Common myeloid progenitor, CD34-positive (primary cell): ENCODE measurements at regions of chr16 and their contacts with region 1.

Region 1: DNA sequence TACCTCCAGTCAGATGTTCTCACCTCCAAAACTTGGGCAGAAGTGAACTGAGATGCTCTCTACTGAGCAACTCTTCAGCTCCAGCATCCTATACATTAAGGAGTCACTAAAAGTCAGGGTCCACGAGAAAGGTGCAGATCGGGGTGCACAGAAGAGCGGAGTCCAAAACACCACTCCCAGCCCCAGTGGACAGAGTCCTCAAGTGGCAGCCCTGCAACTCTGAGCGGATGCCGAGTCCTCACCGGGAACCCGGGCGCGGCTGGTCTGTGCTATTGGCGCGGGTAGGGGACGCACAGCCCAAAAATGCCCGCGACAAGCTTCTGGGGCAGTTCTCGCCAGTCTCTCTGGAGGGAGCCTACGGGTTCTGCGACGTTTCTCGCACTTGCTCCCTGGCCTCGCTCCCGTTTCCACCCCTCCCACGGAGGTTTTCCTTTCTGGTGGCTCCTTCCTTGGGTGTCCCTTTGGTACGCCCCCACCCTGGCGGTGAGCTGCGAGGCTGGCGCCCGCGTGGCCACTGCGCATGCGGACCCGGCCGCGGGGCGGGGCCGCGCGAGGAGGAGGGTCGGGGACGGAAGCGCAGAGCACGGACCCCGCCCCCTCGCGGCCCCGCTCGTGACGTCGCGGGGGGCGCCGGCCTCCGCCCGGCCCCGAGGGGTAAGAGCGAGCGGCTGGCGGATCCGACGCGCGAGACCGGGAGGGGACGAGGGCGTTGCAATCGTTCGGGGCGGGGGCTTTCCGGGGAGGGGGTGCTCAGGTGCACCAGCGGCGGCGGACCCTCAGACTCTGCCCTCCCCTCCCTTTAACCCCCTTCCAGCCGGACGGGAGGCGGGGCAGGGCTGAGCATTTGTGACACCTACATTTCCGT is at the start of gene TMEM219:
- DNase-seq: peak; percentile 91 to 96 (median 95)
- H3K4me3 ChIP-seq: peak within 1 kb of the TSS; percentile 62 to 91 (median 82)
- H3K27ac ChIP-seq: peak within 1 kb of the TSS; percentile 66 to 82
- H3K4me1 ChIP-seq: peaks cover 7 to 19% (median 15%) of the 10 kb centered on the region in 4 experiments
- H3K27me3 ChIP-seq: no peaks in the 10 kb centered on the region

Region 2: DNA sequence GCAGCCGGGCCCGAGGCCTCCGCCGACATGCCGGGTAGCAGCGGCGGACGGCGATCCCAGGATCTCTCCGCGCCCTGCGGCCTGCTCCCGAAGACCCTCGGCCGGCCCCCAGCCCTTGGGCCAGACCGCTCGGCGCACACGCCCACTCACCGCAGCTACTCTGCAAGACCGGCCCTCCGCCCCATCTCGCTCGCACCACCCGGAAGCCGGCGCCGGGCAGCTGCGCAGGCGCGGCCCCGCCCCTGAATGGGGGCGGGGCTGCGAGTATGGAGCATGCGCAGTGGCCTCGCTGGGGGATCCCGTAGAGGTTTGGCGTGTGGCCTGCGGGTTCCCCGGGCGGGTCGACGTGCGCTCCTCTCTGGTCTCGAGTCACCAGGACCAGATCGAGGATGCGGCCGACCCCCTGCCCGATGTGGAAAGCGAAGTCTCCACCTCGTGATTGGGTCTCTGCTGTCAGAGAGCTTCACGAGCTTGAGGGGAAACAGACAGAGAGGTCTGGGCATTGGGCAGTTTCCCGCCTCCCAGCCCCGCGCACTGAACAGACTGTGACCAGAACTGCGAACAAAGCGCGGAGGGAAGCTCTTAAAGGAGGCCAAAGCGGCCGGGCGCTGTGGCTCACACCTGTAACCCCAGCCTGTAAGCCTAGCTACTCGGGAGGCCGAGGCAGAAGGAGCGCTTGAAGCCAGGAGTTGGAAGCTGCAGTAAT is 35.6 kb before region 1 on chr16 and contains the start of gene KCTD13:
- CTCF ChIA-PET with region 1: interaction called, 12 read pairs
- POLR2A ChIA-PET with region 1: interaction called, 4 read pairs
- DNase-seq: peak; percentile 80 to 86 (median 81)
- H3K4me3 ChIP-seq: peak within 1 kb of the TSS; percentile 46 to 95 (median 89)
- H3K27ac ChIP-seq: peak within 1 kb of the TSS in 1 of 2 experiments; percentile 83
- H3K4me1 ChIP-seq: peaks cover 0 to 20% (median 17%) of the 10 kb centered on the region in 4 experiments
- H3K27me3 ChIP-seq: no peaks in the 10 kb centered on the region

Region 3: GRCh38 chr16:29973384-29974246 is 11.9 kb after region 1 on chr16 and contains the start of gene TAOK2:
- CTCF ChIA-PET with region 1: interaction called, 11 read pairs
- POLR2A ChIA-PET with region 1: interaction called, 7 read pairs
- DNase-seq: peak; percentile 99
- H3K4me3 ChIP-seq: peak within 1 kb of the TSS; percentile 86 to 98 (median 95)
- H3K27ac ChIP-seq: peak within 1 kb of the TSS; percentile 80 to 87
- H3K4me1 ChIP-seq: peaks cover 7 to 31% (median 26%) of the 10 kb centered on the region in 4 experiments
- H3K27me3 ChIP-seq: no peaks in the 10 kb centered on the region

Region 4: DNA sequence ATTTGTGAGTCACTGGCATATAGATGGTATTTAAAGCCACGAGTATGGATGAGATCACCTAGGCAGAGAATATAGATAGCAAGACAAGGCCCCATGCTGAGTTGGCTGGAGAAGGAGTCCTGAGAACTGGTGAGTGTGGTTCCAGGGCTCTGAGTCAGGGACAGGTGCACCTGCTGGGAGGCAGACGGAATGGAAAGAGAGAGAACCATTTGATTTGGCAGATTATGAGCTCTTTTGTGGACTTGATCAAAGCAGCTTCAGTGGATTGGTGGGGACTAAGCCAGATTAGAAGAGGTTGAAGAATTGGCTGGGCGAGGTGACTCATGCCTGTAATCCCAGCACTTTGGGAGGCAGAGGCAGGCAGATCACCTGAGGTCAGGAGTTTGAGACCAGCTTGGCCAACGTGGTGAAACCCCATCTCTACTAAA is 57.0 kb after region 1 on chr16:
- CTCF ChIA-PET with region 1: no interaction called
- POLR2A ChIA-PET with region 1: no interaction called
- DNase-seq: no peak
- H3K4me3 ChIP-seq: no peak overlapping the region
- H3K27ac ChIP-seq: no peak overlapping the region
- H3K4me1 ChIP-seq: peaks cover 0 to 11% (median 7%) of the 10 kb centered on the region in 4 experiments
- H3K27me3 ChIP-seq: peaks cover 0 to 3% (median 0%) of the 10 kb centered on the region in 5 experiments